ENCODE measurements at regions of chr11 and their contacts with region 1.

Region 1: GRCh38 chr11:73597956-73598718 is at the start of gene FAM168A:
- DNase-seq: peak; percentile 95
- H3K4me3 Mint-ChIP-seq: peak within 1 kb of the TSS; percentile 90
- H3K27ac Mint-ChIP-seq: peak within 1 kb of the TSS; percentile 84
- H3K4me1 Mint-ChIP-seq: peaks cover 30% of the 10 kb centered on the region
- H3K27me3 Mint-ChIP-seq: no peaks in the 10 kb centered on the region
- total RNA-seq, gene FAM168A: 11.9 to 13.0 TPM

Region 2: GRCh38 chr11:73414977-73415651 is 183.0 kb before region 1 on chr11:
- CTCF ChIA-PET with region 1: no interaction called
- intact Hi-C with region 1: loop called (anchors 10 kb)
- DNase-seq: no peak
- H3K4me3 Mint-ChIP-seq: no peak overlapping the region
- H3K27ac Mint-ChIP-seq: no peak overlapping the region
- H3K4me1 Mint-ChIP-seq: peaks cover 7% of the 10 kb centered on the region
- H3K27me3 Mint-ChIP-seq: no peaks in the 10 kb centered on the region

Region 3: DNA sequence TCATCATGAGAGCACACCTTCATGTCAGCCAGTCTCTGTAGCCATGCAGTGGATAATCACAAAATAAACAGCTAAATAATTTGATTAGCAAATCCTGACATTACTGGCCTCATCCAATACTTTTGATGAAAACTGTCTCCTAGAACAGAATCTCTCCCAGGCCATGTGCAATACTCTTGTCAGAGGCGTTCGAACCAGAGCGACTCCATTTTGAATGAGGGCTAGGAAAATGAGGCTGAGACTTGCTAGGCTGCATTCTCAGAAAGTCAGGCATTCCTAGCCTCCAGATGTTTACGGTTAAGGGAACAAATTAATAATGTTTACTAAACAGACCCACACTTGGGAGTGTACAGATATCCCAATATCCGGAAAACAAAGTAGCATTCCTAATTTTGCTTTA is 70.1 kb before region 1 on chr11:
- CTCF ChIA-PET with region 1: no interaction called
- intact Hi-C with region 1: no loop called
- DNase-seq: no peak
- H3K4me3 Mint-ChIP-seq: no peak overlapping the region
- H3K27ac Mint-ChIP-seq: no peak overlapping the region
- H3K4me1 Mint-ChIP-seq: peaks cover 51% of the 10 kb centered on the region
- H3K27me3 Mint-ChIP-seq: no peaks in the 10 kb centered on the region

Region 4: DNA sequence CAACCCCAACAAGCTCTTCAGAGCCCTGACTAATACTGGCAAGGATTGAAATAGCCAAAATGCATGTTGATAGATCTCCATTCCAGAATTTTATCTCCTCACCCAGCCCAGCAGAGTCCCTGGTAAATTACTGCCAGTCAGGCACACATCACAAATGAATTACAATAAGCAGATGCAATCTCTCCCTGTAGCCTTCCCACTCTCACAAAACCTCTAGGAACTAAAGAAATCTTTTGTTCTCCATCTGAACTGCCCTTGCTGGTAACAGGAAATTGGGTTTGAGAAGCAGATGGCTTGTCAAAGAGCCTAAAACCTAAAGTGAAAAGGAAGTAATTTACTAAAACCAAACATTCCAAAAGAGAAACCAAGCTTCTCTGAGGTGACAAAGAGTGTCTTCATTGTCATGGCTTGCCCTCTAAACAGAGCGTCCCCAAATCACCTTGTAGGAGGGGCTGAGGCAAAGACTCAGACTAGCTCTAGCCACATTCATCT is 59.7 kb before region 1 on chr11:
- CTCF ChIA-PET with region 1: no interaction called
- intact Hi-C with region 1: loop called (anchors 1 kb)
- DNase-seq: peak; percentile 52
- H3K4me3 Mint-ChIP-seq: no peak overlapping the region
- H3K27ac Mint-ChIP-seq: peak overlapping the region; percentile 59
- H3K4me1 Mint-ChIP-seq: peaks cover 30% of the 10 kb centered on the region
- H3K27me3 Mint-ChIP-seq: no peaks in the 10 kb centered on the region

Region 5: GRCh38 chr11:73625696-73626318 is 27.7 kb after region 1 on chr11:
- CTCF ChIA-PET with region 1: interaction called, 11 read pairs
- intact Hi-C with region 1: no loop called
- DNase-seq: peak; percentile 82
- H3K4me3 Mint-ChIP-seq: no peak overlapping the region
- H3K27ac Mint-ChIP-seq: no peak overlapping the region
- H3K4me1 Mint-ChIP-seq: peaks cover 2% of the 10 kb centered on the region
- H3K27me3 Mint-ChIP-seq: peaks cover 16% of the 10 kb centered on the region

Region 6: DNA sequence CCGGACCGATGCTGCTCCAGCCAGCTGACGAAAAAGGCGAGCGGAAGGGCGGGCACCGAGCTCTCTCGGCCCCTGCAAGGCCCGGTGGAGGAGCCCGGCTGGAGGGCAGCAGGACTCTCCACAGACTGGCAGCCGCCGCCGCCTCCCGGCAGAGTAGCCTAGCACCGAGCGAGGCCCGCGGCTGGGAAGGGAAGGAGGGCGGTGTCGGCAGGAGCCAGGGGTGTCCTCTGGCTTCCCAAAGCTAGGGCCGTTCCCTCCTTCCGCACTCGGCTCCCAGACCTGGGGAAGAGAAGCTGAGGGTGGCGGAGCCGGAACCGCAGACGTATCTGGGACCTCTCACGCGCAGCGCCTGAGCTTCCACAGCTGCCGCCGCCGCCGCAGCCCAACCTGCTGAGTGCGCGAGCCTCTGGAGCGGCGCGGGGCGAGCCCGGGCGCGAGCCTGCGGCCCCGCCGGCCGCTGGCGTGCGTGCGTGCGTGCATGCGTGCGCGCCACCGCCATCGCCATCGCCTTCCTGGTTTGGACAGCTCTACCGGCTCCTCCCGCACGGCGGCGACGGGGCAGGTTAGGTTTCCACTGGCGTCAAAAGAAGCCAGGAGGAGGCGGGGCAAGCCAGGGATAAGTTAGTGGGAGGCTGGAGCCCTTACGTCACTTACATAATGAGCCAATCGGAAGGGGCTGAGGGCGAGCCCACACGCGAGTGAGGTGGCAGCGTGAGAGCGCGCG is 162.7 kb after region 1 on chr11 and contains the start of gene RAB6A:
- CTCF ChIA-PET with region 1: no interaction called
- intact Hi-C with region 1: loop called (anchors 1 kb)
- DNase-seq: peak; percentile 100
- H3K4me3 Mint-ChIP-seq: peak within 1 kb of the TSS; percentile 88
- H3K27ac Mint-ChIP-seq: peak within 1 kb of the TSS; percentile 90
- H3K4me1 Mint-ChIP-seq: peaks cover 34% of the 10 kb centered on the region
- H3K27me3 Mint-ChIP-seq: no peaks in the 10 kb centered on the region
- total RNA-seq, gene RAB6A: 36.7 to 41.2 TPM

Region 7: DNA sequence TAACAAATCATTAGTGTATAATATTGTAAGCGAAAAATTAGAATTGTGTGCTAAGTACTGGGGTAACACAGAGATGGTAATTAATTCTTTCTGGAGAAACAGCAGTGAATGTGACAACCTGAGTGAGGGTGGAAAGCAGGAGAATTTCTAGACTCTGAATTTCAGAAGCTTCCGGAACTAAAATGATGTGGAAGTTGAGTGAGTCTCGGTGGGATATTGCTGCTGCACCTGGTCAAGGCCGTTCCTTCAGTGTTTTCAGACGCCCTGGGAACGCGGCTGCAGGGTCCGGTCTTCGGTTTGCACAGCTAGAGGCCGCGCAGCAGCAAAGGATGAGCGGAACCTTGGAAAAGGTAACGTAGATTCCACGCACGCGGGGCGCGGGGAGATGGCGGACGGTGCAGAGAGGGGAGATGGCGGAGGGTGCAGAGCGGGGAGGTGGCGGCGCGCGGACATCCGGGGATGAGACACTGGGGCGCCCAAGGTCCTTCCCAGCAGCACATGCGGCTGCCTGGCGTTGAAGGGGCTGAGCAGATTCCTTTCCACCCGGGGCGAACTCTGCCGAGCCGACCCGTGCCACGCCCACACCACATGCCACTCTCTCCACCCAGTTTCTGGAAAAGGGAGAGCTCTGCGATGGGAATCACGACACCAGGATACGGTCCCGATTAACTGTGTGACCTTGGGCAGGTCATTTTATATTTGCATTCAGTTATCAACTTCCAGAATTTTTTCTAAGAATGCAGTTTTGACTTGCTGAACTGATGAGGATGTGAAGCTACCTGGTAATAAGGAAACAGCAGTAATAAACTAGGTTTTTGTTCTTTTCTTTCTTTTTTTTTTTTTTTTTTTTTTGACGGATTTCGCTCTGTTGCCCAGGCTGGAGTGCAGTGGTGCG is 189.8 kb after region 1 on chr11 and contains the start of gene MRPL48:
- CTCF ChIA-PET with region 1: no interaction called
- intact Hi-C with region 1: loop called (anchors 1 kb)
- DNase-seq: peak; percentile 94
- H3K4me3 Mint-ChIP-seq: peak within 1 kb of the TSS; percentile 97
- H3K27ac Mint-ChIP-seq: peak within 1 kb of the TSS; percentile 98
- H3K4me1 Mint-ChIP-seq: peaks cover 13% of the 10 kb centered on the region
- H3K27me3 Mint-ChIP-seq: no peaks in the 10 kb centered on the region
- total RNA-seq, gene MRPL48: 49.2 to 53.5 TPM

Region 8: GRCh38 chr11:74170694-74171629 is 572.8 kb after region 1 on chr11 and contains the starts of genes C2CD3 and PPME1:
- CTCF ChIA-PET with region 1: no interaction called
- intact Hi-C with region 1: loop called (anchors 1 kb)
- DNase-seq: peak; percentile 99
- H3K4me3 Mint-ChIP-seq: no peak within 1 kb of the TSS
- H3K27ac Mint-ChIP-seq: no peak within 1 kb of the TSS
- H3K4me1 Mint-ChIP-seq: peaks cover 17% of the 10 kb centered on the region
- H3K27me3 Mint-ChIP-seq: no peaks in the 10 kb centered on the region
- total RNA-seq, gene C2CD3: 21.3 to 23.1 TPM
- total RNA-seq, gene PPME1: 19.0 to 22.1 TPM